Activated CD8-positive, alpha-beta memory T cell treated with anti-CD3 and anti-CD28 coated beads, Interleukin-2, amount 10 ng/mL, durations not matched to agents 7 days and 5 days (primary cell): ENCODE measurements at regions of chr22 and their contacts with region 1.

Region 1: GRCh38 chr22:39532215-39533071 is at the start of gene RPS19BP1:
- DNase-seq: peak; percentile 100
- ATAC-seq: peak; percentile 84
- H3K4me3 Mint-ChIP-seq: peak within 1 kb of the TSS; percentile 93
- H3K27ac Mint-ChIP-seq: peak within 1 kb of the TSS; percentile 93
- H3K4me1 Mint-ChIP-seq: peaks cover 59% of the 10 kb centered on the region
- H3K27me3 Mint-ChIP-seq: no peaks in the 10 kb centered on the region
- total RNA-seq, gene RPS19BP1: 64.8 to 81.6 TPM

Region 2: DNA sequence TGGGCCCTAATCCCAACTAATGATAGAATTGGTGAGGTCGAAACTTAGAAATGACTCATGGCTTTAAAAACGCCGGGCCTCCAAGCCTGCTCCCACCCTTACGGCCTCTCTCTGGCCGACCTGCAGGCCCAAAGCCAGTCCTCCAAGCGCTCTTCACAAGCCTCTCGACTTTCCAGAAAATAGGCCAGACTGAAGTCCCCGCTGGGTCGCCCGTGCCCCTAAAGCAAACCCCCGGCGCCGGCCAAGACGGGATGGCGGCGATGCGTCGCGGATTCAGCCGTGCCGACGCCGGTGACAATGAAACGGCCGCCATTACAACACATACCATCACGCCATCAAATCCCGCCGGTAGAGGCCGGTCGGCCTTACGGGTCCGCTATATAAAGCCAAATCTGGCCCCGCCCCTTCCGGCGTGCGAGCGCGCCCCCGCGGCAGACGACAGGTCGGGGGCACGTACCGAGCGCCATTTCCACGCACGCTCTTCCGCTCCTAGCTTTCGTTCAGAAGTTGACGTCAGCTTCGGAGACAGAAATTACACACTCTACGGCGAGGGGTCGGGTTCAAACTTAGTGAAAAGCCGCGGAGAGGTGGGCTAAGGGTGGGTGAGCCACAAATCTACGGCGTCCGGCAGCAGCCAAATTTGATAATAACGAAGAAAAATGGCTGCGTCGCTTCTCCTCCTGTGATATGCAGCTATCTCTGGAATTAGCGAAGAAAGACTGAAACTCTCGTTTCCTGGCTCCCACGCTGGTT is 213.0 kb before region 1 on chr22 and contains the start of gene RPL3:
- CTCF ChIA-PET with region 1: interaction called, 47 read pairs
- DNase-seq: peak; percentile 97
- ATAC-seq: peak; percentile 82
- H3K4me3 Mint-ChIP-seq: peak within 1 kb of the TSS; percentile 99
- H3K27ac Mint-ChIP-seq: peak within 1 kb of the TSS; percentile 92
- H3K4me1 Mint-ChIP-seq: peaks cover 45% of the 10 kb centered on the region
- H3K27me3 Mint-ChIP-seq: no peaks in the 10 kb centered on the region
- total RNA-seq, gene RPL3: 1,571 to 1,769 TPM

Region 3: GRCh38 chr22:39502109-39502788 is 30.2 kb before region 1 on chr22 and contains the start of gene MIEF1:
- CTCF ChIA-PET with region 1: interaction called, 251 read pairs
- DNase-seq: peak; percentile 97
- ATAC-seq: peak; percentile 98
- H3K4me3 Mint-ChIP-seq: peak within 1 kb of the TSS; percentile 88
- H3K27ac Mint-ChIP-seq: peak within 1 kb of the TSS; percentile 94
- H3K4me1 Mint-ChIP-seq: peaks cover 31% of the 10 kb centered on the region
- H3K27me3 Mint-ChIP-seq: peaks cover 4% of the 10 kb centered on the region
- total RNA-seq, gene MIEF1: 40.6 to 45.7 TPM

Region 4: DNA sequence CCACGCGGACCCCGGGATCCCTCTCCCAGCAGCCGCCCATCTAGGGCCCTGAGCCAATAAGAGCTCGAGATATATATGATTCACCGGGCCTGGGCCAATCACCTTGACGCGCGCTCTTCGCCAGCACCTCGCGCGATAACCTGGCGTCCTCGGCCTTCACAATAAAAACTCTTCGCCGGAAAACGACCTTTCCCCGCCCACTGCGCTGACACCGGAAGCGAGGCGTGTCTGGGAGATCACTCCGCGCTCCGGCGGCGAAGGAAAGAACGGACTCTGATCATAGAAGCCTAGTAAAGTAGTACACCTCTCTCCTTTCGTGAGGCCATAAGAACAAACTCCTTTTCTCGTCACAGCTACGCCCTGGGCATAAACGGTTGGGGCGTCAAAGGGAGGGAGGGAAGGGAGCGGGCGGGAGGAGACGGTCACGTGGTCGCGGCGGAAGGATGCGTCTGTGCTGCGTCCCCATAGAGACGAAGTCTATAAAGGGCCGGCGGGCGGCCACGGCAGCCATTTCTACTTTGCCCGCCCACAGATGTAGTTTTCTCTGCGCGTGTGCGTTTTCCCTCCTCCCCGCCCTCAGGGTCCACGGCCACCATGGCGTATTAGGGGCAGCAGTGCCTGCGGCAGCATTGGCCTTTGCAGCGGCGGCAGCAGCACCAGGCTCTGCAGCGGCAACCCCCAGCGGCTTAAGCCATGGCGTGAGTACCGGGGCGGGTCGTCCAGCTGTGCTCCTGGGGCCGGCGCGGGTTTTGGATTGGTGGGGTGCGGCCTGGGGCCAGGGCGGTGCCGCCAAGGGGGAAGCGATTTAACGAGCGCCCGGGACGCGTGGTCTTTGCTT is 12.2 kb before region 1 on chr22 and contains the start of gene ATF4:
- CTCF ChIA-PET with region 1: interaction called, 37 read pairs
- DNase-seq: peak; percentile 99
- ATAC-seq: peak; percentile 90
- H3K4me3 Mint-ChIP-seq: peak within 1 kb of the TSS; percentile 86
- H3K27ac Mint-ChIP-seq: peak within 1 kb of the TSS; percentile 94
- H3K4me1 Mint-ChIP-seq: peaks cover 55% of the 10 kb centered on the region
- H3K27me3 Mint-ChIP-seq: no peaks in the 10 kb centered on the region
- total RNA-seq, gene ATF4: 365 to 501 TPM

Region 5: GRCh38 chr22:39651053-39651996 is 118.9 kb after region 1 on chr22:
- CTCF ChIA-PET with region 1: no interaction called
- DNase-seq: no peak
- ATAC-seq: no peak
- H3K4me3 Mint-ChIP-seq: no peak overlapping the region
- H3K27ac Mint-ChIP-seq: no peak overlapping the region
- H3K4me1 Mint-ChIP-seq: no peaks in the 10 kb centered on the region
- H3K27me3 Mint-ChIP-seq: no peaks in the 10 kb centered on the region

Region 6: DNA sequence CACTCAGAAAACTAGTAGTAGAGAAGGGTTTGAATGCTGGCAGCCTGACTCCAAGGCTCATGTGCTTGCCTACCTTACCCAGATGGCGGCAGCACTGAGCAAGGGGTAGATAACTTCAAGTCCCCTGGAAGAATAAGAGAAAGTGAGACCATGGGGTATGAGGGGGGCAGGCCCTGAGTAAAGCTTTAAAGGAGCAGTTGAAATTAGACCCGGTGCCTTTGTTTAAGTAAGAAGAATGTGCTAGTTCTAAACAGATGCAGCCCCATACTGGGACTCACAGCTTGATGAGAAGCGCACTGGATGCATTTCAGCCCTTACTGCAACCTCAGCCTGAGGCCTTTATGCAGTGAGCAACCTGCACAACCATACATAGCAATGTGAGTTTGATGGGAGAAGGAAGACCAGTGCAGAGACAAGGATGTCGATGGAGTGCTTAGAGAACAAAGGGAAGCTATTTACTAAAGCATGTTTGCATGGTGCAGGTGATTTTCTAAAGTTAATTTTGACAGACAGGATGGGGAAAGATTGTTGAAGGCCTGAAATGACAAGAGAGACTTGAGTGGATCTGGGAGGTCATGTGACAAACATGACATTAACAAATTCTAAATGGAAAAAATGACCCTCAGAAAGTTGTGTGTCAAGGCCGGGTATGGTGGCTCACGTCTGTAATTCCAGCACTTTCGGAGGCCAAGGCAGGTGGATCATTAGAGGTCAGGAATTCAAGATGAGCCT is 400.6 kb after region 1 on chr22:
- CTCF ChIA-PET with region 1: interaction called, 14 read pairs
- DNase-seq: peak; percentile 87
- ATAC-seq: peak; percentile 59
- H3K4me3 Mint-ChIP-seq: peak overlapping the region; percentile 72
- H3K27ac Mint-ChIP-seq: peak overlapping the region; percentile 94
- H3K4me1 Mint-ChIP-seq: peaks cover 55% of the 10 kb centered on the region
- H3K27me3 Mint-ChIP-seq: no peaks in the 10 kb centered on the region

Region 7: GRCh38 chr22:40036591-40037225 is 504.3 kb after region 1 on chr22:
- CTCF ChIA-PET with region 1: interaction called, 478 read pairs
- DNase-seq: peak; percentile 71
- ATAC-seq: peak; percentile 84
- H3K4me3 Mint-ChIP-seq: no peak overlapping the region
- H3K27ac Mint-ChIP-seq: no peak overlapping the region
- H3K4me1 Mint-ChIP-seq: peaks cover 7% of the 10 kb centered on the region
- H3K27me3 Mint-ChIP-seq: peaks cover 22% of the 10 kb centered on the region

Region 8: DNA sequence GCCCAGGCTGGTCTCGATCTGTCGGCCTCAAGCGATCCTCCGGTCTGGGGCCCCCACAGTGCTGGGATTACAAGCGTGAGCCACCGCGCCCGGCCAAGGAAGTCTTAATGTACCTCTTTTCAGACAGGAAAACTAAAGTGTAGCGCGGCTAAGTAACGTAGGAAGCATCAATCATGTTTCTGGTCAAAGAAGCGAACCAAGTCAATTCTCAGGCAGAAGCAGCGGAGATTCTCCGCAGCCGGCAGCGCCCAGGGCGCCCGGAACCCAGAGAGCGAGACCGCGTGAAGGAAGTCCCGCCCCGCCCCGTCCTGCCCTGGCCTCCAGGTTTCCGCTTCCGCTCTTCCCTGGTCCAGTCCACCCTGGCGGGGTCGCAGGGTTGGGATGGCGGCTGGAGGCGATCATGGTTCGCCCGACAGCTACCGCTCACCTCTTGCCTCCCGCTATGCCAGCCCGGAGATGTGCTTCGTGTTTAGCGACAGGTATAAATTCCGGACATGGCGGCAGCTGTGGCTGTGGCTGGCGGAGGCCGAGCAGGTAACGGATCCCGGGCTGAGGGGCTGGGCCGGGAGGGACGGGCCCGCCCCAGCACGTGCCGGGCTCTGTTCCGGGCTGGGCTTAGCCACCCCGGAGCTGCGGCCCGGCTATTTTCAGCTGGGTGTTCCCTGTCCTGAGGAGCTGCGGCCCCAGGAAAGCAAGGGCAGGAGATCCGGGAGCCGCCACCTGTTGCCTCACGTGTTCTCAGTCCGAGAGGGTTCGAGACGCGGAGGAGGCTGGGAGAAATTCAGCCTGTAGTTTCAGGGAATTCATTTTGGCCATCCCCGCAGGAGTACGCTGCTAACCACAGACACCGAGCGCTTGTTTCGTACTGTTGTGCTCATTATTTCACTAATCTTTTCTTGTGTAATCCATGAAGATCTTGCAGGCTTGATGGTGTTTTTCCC is 814.0 kb after region 1 on chr22 and contains the start of gene ADSL:
- CTCF ChIA-PET with region 1: interaction called, 19 read pairs
- DNase-seq: peak; percentile 90
- ATAC-seq: peak; percentile 92
- H3K4me3 Mint-ChIP-seq: peak within 1 kb of the TSS; percentile 99
- H3K27ac Mint-ChIP-seq: peak within 1 kb of the TSS; percentile 99
- H3K4me1 Mint-ChIP-seq: peaks cover 50% of the 10 kb centered on the region
- H3K27me3 Mint-ChIP-seq: no peaks in the 10 kb centered on the region
- total RNA-seq, gene ADSL: 98.3 to 109 TPM